Aorta (tissue), 5 donors: ENCODE measurements at regions of chr5 and their contacts with region 1.

Region 1: GRCh38 chr5:175718401-175719108 is 60.7 kb downstream of the HRH2 start:
- DNase-seq: peak in 1 of 2 donors; percentile 84
- ATAC-seq: no peak
- H3K4me3 ChIP-seq: no peak overlapping the region
- H3K27ac ChIP-seq: no peak overlapping the region
- H3K4me1 ChIP-seq: no peaks in the 10 kb centered on the region
- H3K27me3 ChIP-seq: no peaks in the 10 kb centered on the region

Region 2: DNA sequence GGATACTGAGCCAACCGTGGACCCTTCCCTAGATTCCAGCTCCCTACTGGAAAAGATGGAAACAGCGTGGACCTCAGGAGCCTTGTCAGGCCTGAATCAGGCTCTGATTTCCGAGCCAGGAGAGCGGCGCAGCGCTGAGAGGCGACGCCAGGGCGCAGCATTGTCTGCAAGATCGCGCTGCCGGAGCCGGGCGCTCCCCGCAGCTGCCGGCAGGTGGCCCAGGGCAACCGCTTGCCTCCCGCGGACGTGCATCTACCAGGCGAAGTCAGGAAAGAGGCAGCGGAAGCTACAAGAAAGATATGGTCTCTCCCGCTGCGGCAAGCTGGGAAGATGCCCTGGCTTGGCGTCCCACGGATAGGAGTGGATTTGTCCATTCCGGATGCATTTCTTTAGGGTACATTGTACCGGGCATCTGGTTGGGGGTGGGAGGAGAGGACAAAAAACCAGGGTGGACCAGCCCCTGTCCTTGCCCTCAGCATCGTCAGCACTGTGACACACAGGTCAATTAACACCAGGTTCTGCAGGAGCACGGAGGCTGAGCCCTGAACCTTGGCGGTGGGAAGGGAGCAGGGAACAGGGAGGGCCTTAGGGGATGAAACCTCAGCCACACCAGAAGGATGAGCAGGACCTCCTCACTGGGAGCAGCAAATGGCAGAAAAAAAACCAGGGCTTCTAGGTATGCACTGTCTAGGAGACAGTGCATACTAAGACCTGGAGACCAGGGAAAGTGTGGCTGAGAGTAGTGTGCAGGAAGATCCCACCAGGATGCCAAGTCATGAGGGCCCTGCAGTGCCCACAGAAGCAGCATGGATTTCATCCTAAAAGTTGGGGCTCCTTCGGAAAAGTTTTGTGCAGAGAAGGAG is 184.3 kb before region 1 on chr5:
- intact Hi-C with region 1: loop called (anchors 2 to 5 kb)
- DNase-seq: peak; percentile 87 to 93
- ATAC-seq: peak; percentile 93
- H3K4me3 ChIP-seq: no peak overlapping the region
- H3K27ac ChIP-seq: no peak overlapping the region
- H3K4me1 ChIP-seq: no peaks in the 10 kb centered on the region
- H3K27me3 ChIP-seq: no peaks in the 10 kb centered on the region